CD14-positive monocyte (primary cell): ENCODE measurements at regions of chr7 and their contacts with region 1.

Region 1: DNA sequence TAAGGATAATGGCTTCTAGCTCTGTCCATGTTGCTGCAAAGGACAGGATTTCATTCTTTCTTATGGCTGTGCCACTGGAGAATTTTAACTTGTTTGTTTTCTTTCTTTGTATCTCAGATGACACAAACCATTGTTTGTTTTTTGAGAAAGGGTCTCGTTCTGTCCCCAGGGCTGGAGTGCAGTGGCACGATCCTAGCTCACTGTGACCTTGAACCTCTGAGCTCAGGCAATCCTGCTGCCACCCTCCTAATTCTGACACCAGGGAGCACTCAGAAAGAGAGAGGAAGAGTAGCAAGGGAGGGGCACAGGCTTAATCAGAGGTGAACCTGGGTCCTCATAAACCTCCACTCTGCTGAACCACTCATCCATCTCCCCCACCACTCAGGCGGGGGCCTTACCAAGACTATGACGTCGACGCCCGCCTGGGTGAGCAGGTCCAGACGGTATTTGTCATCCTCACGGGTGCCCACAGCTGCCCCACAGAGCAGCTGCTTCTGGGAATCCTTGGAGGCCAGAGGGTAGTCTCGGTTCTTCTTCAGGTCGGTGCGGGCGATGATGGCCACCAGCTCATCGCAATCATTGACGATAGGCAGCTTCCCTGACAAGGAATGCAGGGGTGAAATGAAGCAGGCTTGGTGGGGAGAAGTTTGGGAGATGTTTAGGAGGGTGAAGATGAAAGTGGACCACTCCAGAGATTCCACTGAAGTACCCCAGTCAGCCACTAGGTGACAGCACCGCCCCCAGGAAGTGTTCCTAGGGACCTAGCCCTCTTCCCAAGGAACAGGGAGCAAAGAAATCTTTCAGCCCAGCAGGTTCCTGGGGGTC is 11.6 kb downstream of the IMPDH1 start:
- DNase-seq: peak in 2 of 3 donors; percentile 42 to 54
- H3K4me3 ChIP-seq: no peak overlapping the region
- H3K4me3 Mint-ChIP-seq: no peak overlapping the region
- H3K27ac ChIP-seq: no peak overlapping the region
- H3K27ac Mint-ChIP-seq: peak overlapping the region in 1 of 7 donors; percentile 32
- H3K4me1 ChIP-seq: no peaks in the 10 kb centered on the region
- H3K4me1 Mint-ChIP-seq: no peaks in the 10 kb centered on the region
- H3K27me3 ChIP-seq: no peaks in the 10 kb centered on the region
- H3K27me3 Mint-ChIP-seq: no peaks in the 10 kb centered on the region
- CTCF ChIP-seq: peak; percentile 97

Region 2: GRCh38 chr7:128425850-128426249 is 27.6 kb after region 1 on chr7:
- intact Hi-C with region 1: loop called in 1 of 2 experiments (anchors 1 kb)
- DNase-seq: peak; percentile 63 to 75 (median 73)
- H3K4me3 ChIP-seq: no peak overlapping the region
- H3K4me3 Mint-ChIP-seq: no peak overlapping the region
- H3K27ac ChIP-seq: no peak overlapping the region
- H3K27ac Mint-ChIP-seq: no peak overlapping the region
- H3K4me1 ChIP-seq: peaks cover 34 to 47% of the 10 kb centered on the region in 2 donors
- H3K4me1 Mint-ChIP-seq: peaks cover 24% of the 10 kb centered on the region
- H3K27me3 ChIP-seq: no peaks in the 10 kb centered on the region
- H3K27me3 Mint-ChIP-seq: no peaks in the 10 kb centered on the region
- CTCF ChIP-seq: peak; percentile 97